ENCODE measurements at regions of chr9 and their contacts with region 1.

Region 1: DNA sequence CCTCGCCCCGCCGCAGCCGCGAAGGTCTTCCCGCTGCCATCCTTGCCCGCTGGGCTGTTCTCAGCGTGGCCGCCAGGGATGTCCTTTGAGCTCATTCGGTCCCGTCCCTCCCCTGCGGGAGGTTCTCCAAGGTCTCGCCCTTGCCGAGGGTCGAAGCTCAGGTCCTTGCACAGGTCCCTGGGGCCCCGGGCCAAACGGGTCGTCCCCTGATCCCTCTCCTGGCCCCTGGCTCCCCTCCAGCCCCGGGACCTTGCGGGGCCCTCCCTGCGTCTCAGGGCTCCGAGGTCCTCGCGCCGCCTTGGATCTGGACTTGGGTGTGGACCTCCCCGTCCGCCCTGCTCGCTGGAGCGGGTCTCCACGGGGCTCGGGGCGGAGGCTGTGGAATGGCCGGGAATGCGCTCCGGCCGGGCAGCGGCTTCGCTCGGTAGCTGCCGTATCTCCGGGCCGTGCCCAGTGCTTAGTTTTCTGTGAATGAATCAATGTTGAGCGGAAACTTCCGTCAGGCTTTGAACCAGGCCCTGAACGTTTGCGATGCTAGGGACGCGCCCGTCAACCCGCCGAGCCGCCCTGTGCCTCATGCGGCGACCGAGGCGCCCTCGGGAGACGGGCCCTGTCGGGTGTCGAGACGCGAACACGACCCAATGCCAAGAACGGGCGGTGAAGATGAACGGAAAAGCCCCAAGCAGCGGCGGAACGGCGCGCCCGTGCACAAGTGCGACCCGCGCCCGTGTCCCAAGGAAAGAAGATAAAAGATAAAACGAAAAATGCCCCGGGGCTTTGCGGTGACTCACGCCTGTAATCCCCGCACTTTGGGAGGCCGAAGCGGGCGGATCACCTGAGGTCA is 789 bp downstream of the RNU6ATAC start:
- DNase-seq: peak; percentile 65 to 86
- H3K4me3 ChIP-seq: no peak overlapping the region
- H3K27ac ChIP-seq: no peak overlapping the region
- H3K4me1 ChIP-seq: peaks cover 0 to 10% (median 8%) of the 10 kb centered on the region in 4 donors
- H3K27me3 ChIP-seq: no peaks in the 10 kb centered on the region
- CTCF ChIP-seq: peak; percentile 53 to 59

Region 2: GRCh38 chr9:133945314-133945975 is 218.1 kb before region 1 on chr9:
- intact Hi-C with region 1: no loop called
- DNase-seq: no peak
- H3K4me3 ChIP-seq: no peak overlapping the region
- H3K27ac ChIP-seq: no peak overlapping the region
- H3K4me1 ChIP-seq: no peaks in the 10 kb centered on the region
- H3K27me3 ChIP-seq: no peaks in the 10 kb centered on the region
- CTCF ChIP-seq: no peak

Region 3: DNA sequence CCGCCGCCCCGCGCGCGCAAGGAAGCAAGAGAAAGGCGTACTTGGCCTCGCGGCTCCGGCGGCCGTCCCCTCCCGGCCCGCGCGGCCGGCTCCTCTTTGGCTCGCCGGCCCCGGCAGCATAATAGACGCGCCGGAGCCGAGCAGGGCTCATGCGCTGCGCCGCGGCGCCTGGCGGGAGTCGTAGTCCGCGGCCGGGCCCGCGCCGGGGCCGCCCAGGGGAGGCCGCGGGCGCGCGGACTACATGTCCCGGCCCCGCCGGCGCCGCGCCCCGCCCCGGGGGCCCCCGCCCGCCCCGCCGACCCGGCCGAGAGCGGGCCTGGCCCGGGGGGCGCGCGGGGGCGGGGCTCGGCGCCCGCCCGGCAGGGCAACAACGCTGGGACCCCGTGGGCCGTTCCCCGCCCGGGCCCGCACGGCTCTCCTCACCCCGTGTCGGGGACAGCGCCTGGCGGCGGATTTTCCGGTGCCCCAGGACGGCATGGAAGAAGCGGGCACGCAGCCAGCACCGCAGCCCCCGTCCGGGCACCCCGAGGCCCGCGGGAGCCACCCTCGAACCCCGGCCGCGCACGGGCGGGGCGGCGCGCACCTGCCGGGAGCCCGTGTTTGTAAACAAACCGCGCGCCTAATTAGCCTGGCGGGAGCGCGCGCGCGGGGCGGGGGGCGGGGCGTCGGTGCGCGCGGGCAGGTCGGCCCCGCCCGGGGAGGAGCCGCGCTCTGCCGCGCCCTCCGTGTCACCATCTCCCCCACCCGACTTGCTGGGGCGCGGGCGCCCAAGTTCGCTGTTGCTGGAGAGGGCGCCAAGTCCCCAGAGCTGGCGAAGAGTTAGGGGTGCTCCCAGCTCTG is 95.5 kb before region 1 on chr9 and contains the start of gene BRD3:
- intact Hi-C with region 1: loop called (anchors 5 kb)
- DNase-seq: peak; percentile 84 to 91
- H3K4me3 ChIP-seq: peak within 1 kb of the TSS; percentile 88 to 95
- H3K27ac ChIP-seq: peak within 1 kb of the TSS; percentile 91 to 95
- H3K4me1 ChIP-seq: peaks cover 0 to 39% (median 27%) of the 10 kb centered on the region in 4 donors
- H3K27me3 ChIP-seq: peaks cover 0 to 26% of the 10 kb centered on the region in 2 donors
- CTCF ChIP-seq: no peak

Region 4: DNA sequence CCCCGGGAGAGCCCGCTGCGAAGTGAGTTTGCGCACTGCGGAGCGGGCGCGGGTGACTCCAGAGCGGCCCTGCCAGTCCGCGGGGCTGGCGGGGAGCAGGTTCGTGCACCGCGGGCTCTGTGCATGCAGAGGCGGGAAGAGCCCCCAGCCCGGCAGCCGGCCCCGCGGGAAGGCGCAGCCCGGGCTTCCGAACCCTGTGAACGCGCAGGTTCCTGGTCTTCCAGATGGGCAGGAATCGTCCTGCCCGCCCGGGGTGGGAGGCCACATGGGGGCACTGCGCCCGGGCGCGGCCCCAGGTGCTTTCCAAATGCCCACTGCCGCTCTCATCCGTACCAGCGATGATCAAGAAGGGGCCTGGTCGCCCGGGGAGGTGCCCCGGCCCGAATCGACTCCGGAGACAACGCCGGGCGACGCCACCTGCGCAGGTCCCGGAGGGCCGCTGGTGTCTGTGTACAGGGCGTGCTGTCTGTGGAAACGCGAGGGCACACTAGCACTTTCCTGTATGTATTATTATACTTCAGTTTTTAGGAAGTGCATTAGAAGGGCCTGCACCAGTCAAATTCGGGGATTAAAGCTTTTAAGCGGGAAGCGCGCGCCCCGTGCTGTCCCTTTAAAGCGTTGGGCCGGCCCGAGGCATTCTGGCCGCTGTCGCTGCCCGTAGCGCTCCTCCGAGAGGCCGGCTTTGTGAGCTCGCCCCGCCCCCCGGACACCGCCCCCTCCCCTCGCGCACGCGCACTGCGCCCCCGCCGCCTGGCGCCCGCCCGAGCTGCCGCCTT is 28.0 kb before region 1 on chr9 and contains the start of gene WDR5:
- intact Hi-C with region 1: loop called (anchors 1 kb)
- DNase-seq: peak; percentile 90 to 94
- H3K4me3 ChIP-seq: peak within 1 kb of the TSS; percentile 74 to 80
- H3K27ac ChIP-seq: peak within 1 kb of the TSS; percentile 88 to 94
- H3K4me1 ChIP-seq: peaks cover 0 to 55% (median 44%) of the 10 kb centered on the region in 4 donors
- H3K27me3 ChIP-seq: no peaks in the 10 kb centered on the region
- CTCF ChIP-seq: no peak

Region 5: DNA sequence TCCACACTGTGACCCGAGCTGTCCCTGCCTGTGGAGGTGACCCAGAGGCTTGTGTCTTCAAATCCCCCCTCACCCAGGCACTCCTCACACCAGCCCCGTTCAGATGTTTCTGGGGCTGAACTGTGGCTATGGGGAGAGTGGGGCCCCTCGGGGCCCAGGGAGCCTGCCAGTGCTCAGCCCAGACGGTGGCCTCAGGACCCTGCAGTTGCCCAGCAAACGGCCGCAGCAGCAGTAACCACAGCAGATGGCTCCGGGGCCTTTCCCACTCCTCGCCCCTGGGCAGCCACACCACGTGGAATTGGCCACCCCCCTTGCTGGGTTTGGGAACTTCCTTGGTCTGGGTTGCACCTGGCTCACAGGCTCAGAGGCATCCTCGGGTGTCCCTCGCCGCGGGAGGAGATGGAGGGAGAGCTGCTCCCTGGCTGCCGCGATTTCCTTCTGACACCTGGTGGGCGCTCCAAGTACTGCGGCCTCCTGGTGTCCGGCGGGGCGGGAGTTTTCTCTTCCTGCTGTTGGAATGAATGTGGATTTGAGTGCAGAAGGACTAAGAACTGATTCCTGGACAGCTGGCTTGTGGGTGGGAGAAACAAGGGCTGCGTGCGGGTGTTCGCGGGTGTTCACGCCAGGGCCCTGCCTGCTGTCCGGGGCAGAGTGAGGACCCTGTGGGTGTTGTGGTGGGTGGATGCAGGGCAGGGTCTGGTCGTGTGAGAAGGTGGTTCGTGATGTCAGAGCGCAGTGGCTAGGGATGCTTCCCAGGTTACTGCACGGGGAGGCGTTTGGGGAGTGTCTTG is 575.5 kb after region 1 on chr9:
- intact Hi-C with region 1: loop called (anchors 10 kb)
- DNase-seq: peak; percentile 70 to 84
- H3K4me3 ChIP-seq: no peak overlapping the region
- H3K27ac ChIP-seq: no peak overlapping the region
- H3K4me1 ChIP-seq: peaks cover 0 to 18% (median 2%) of the 10 kb centered on the region in 4 donors
- H3K27me3 ChIP-seq: no peaks in the 10 kb centered on the region
- CTCF ChIP-seq: peak; percentile 91 to 92